ENCODE measurements at regions of chr22 and their contacts with region 1.

Region 1: DNA sequence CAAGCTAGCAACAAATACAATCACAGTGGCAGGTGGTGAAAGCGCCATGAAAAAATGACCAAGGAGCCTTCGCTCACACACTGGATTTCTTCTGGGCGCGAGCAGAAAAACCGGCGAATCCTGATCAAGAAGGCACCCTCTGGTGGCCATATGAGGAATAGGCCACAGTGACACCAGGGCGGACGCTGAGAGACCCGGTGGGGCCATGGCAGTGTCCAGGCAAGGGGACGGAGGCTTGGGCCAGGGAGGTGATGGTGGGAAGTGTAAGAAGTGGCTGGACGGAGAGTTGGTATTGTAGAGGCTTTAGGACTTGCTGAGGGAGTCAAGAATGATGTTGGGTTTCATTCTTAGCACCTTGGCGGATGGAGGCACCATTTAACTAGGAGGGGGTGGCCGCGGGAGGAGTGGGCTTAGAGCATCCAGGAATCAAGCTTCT is 16.9 kb upstream of the RAC2 start:
- DNase-seq: peak in 2 of 3 donors; percentile 53 to 58
- H3K4me3 ChIP-seq: no peak overlapping the region
- H3K27ac ChIP-seq: no peak overlapping the region
- H3K4me1 ChIP-seq: peaks cover 2 to 23% (median 15%) of the 10 kb centered on the region in 4 experiments
- H3K27me3 ChIP-seq: no peaks in the 10 kb centered on the region

Region 2: GRCh38 chr22:37199103-37199759 is 61.7 kb before region 1 on chr22:
- CTCF ChIA-PET with region 1: interaction called, 17 read pairs
- POLR2A ChIA-PET with region 1: no interaction called
- DNase-seq: peak; percentile 98 to 99 (median 99)
- H3K4me3 ChIP-seq: peak overlapping the region; percentile 48 to 82 (median 61)
- H3K27ac ChIP-seq: peak overlapping the region; percentile 78 to 81
- H3K4me1 ChIP-seq: peaks cover 3 to 31% (median 19%) of the 10 kb centered on the region in 4 experiments
- H3K27me3 ChIP-seq: no peaks in the 10 kb centered on the region

Region 3: GRCh38 chr22:37229805-37230672 is 30.9 kb before region 1 on chr22:
- CTCF ChIA-PET with region 1: interaction called, 49 read pairs
- POLR2A ChIA-PET with region 1: interaction called, 3 read pairs
- DNase-seq: peak; percentile 88 to 97 (median 96)
- H3K4me3 ChIP-seq: peak overlapping the region in 4 of 7 experiments; percentile 1 to 44 (median 27)
- H3K27ac ChIP-seq: peak overlapping the region; percentile 58 to 79
- H3K4me1 ChIP-seq: peaks cover 2 to 85% (median 64%) of the 10 kb centered on the region in 4 experiments
- H3K27me3 ChIP-seq: no peaks in the 10 kb centered on the region

Region 4: DNA sequence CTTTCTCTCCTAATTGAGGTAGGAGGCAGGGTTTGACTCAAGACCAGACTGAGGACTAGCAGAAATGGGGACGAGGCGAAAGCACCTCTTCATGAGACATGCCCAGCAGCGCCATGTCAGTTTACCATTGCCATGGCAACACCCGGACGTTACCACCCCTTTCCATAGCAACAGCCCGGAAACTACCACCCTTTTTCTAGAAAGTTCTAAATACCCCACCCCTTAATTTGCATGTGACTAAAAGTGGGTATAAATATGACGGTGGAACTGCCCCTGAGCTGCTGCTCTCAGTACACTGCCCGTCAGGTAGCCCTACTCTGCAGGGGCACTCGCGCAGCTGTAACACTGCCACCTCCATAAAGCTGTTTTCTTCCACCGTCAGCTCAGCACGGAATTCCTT is 10.9 kb before region 1 on chr22:
- CTCF ChIA-PET with region 1: interaction called, 157 read pairs
- POLR2A ChIA-PET with region 1: interaction called, 4 read pairs
- DNase-seq: no peak
- H3K4me3 ChIP-seq: no peak overlapping the region
- H3K27ac ChIP-seq: no peak overlapping the region
- H3K4me1 ChIP-seq: peaks cover 6 to 20% (median 13%) of the 10 kb centered on the region in 4 experiments
- H3K27me3 ChIP-seq: no peaks in the 10 kb centered on the region

Region 5: GRCh38 chr22:37282385-37282677 is 21.4 kb after region 1 on chr22 and contains the start of gene CYTH4:
- CTCF ChIA-PET with region 1: interaction called, 42 read pairs
- POLR2A ChIA-PET with region 1: no interaction called
- DNase-seq: peak; percentile 79 to 91 (median 80)
- H3K4me3 ChIP-seq: peak within 1 kb of the TSS in 6 of 7 experiments; percentile 66 to 92 (median 76)
- H3K27ac ChIP-seq: peak within 1 kb of the TSS; percentile 33 to 62
- H3K4me1 ChIP-seq: peaks cover 32 to 92% (median 72%) of the 10 kb centered on the region in 4 experiments
- H3K27me3 ChIP-seq: no peaks in the 10 kb centered on the region

Region 6: GRCh38 chr22:37316875-37317371 is 56.0 kb after region 1 on chr22:
- CTCF ChIA-PET with region 1: interaction called, 64 read pairs
- POLR2A ChIA-PET with region 1: interaction called, 4 read pairs
- DNase-seq: peak; percentile 79 to 88 (median 87)
- H3K4me3 ChIP-seq: no peak overlapping the region
- H3K27ac ChIP-seq: no peak overlapping the region
- H3K4me1 ChIP-seq: peaks cover 1 to 42% (median 38%) of the 10 kb centered on the region in 4 experiments
- H3K27me3 ChIP-seq: no peaks in the 10 kb centered on the region